Activated CD8-positive, alpha-beta T cell treated with anti-CD3 and anti-CD28 coated beads for 36 hours (primary cell): ENCODE measurements at regions of chr3 and their contacts with region 1.

Region 1: GRCh38 chr3:98573181-98573728 is 20.2 kb downstream of the CPOX start:
- DNase-seq: no peak
- ATAC-seq: peak; percentile 48
- H3K4me3 Mint-ChIP-seq: no peak overlapping the region
- H3K27ac Mint-ChIP-seq: peak overlapping the region; percentile 76
- H3K4me1 Mint-ChIP-seq: peaks cover 50% of the 10 kb centered on the region
- H3K27me3 Mint-ChIP-seq: no peaks in the 10 kb centered on the region
- CTCF ChIP-seq: peak; percentile 87

Region 2: DNA sequence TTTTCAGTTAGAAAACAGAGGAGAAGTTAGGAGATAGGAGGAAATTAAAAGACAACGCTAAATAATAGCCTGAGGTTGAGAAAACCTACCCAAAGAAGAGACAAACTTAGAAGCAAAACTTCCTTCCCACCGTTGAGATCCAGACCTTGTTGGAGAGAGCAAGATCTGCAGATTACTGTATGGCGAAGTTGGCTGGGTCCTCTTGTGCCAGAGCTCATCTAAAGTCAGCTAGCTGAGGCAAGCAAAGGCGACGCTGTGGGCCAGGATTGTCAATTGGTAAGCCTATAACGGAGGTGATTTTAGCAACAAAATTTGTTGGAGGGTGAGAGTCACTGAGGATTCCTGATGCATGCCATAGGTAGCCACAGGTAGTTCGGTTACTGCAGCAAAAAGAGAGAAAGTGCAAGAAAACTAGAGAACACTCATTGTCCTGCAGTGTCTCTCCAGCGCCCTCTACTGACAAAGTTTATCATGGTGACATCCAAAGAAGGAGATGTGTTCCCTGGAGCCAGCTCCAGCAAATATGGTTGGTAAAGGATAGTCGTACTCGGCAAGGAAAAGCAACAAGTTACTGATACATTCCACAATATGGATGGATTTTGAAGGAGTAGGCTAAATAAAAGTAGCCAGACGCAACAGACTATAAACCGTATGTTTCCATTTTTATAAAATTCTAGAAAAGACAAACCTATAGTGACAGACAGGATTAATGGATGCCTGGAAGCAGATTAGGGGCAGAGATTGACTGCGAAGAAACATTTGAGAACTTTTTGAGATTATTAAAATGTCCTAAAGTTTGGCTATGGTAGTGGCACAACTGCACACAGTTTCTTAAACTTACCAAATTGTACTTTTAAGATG is 229.4 kb before region 1 on chr3:
- CTCF ChIA-PET with region 1: interaction called, 5 read pairs
- POLR2A ChIA-PET with region 1: no interaction called
- intact Hi-C with region 1: loop called (anchors 10 kb)
- DNase-seq: peak; percentile 51
- ATAC-seq: peak; percentile 37
- H3K4me3 Mint-ChIP-seq: no peak overlapping the region
- H3K27ac Mint-ChIP-seq: no peak overlapping the region
- H3K4me1 Mint-ChIP-seq: no peaks in the 10 kb centered on the region
- H3K27me3 Mint-ChIP-seq: peaks cover 12% of the 10 kb centered on the region
- CTCF ChIP-seq: peak; percentile 77

Region 3: GRCh38 chr3:98440283-98440942 is 132.8 kb before region 1 on chr3:
- CTCF ChIA-PET with region 1: interaction called, 3 read pairs
- POLR2A ChIA-PET with region 1: no interaction called
- intact Hi-C with region 1: loop called (anchors 5 kb)
- DNase-seq: no peak
- ATAC-seq: no peak
- H3K4me3 Mint-ChIP-seq: no peak overlapping the region
- H3K27ac Mint-ChIP-seq: no peak overlapping the region
- H3K4me1 Mint-ChIP-seq: no peaks in the 10 kb centered on the region
- H3K27me3 Mint-ChIP-seq: no peaks in the 10 kb centered on the region
- CTCF ChIP-seq: no peak

Region 4: DNA sequence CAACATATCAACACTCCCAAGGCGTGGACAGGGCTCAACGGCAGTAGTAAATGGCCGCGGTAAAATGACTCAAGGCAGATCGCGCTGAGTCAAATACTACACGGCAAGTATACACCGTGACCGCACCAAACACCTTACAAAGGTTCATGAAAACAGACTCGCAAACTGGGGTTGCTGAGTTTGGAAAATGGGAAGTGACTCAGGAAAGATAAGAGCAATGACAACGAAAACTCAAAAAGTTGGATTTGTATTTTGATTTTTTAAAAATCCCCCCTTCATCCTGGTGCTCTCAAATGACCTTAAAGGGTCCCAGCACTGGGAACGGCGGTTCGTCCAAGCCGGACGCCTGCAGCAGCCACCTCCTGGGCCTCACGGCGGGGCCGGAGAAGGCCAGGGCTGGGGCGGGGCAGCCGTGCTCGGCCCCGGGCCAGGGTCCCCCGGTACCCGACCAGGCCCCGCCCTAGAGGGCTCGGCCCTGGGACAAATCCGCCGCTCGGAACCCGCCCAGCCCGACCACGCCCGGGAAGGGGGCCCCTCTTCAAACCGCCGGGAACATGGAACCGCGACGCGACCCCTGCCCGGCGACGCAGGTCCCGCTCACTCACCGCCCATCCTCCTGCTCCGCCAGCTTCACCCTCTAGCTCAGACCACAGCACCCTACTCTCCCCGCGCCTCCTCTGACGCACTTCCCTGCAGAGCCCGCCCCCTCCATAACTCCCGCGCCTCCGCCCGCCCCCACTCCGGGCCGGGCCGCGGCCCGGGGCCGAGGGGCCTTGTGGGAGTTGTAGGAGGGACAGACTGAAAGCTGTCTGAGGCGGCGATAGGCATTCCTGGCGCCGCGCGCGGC is 50.8 kb before region 1 on chr3 and contains the start of gene CLDND1:
- CTCF ChIA-PET with region 1: interaction called, 9 read pairs
- POLR2A ChIA-PET with region 1: interaction called, 5 read pairs
- intact Hi-C with region 1: loop called (anchors 2 kb)
- DNase-seq: peak; percentile 97
- ATAC-seq: peak; percentile 96
- H3K4me3 Mint-ChIP-seq: peak within 1 kb of the TSS; percentile 89
- H3K27ac Mint-ChIP-seq: peak within 1 kb of the TSS; percentile 95
- H3K4me1 Mint-ChIP-seq: peaks cover 62% of the 10 kb centered on the region
- H3K27me3 Mint-ChIP-seq: no peaks in the 10 kb centered on the region
- CTCF ChIP-seq: no peak
- total RNA-seq, gene CLDND1: 190 to 198 TPM

Region 5: DNA sequence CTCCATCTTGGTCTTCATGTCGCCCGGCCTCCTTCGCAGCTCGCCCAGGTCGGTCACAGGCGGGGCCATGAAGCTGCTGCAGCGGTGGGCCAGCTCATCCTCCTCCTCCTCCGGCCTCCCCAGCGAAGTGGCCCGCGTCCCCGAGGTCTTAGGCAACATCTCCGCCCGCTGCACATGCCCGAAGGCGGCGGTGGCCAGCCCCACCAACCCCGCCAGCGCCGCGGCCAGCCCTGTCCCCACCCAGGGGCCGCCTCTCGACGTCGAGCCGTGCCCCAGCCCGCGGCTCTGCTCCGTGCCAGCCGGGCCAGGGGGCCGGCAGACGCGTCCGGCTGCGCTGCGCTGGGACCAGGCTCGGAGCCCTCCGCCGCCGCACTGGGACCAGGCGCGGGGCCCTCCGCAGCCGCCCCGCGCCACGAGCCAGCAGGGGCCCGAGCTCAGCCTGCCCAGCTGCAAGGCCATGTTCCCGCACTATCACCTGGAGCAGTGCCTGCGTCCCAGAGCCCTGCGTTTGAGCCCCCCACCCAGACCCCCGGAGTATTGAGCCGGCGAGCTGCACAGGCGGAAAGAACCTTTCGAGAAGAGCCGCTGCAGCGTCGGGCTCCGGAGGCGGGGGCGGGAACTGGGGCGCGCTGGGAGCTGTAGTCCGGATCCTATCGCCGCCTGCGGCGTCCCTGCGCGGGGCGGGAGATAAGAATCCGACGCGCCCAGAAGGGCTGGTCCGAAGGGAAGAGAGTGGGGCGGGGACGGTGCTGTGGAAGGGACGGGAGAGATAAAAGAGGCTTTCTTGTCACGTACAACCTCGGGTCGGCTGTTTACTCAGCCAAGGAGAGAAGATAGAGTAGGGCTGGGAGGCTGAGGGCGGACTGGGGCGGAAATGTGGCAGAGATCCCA is 20.0 kb after region 1 on chr3 and contains the start of gene CPOX:
- CTCF ChIA-PET with region 1: interaction called, 44 read pairs
- POLR2A ChIA-PET with region 1: interaction called, 5 read pairs
- intact Hi-C with region 1: no loop called
- DNase-seq: peak; percentile 94
- ATAC-seq: peak; percentile 99
- H3K4me3 Mint-ChIP-seq: peak within 1 kb of the TSS; percentile 96
- H3K27ac Mint-ChIP-seq: peak within 1 kb of the TSS; percentile 96
- H3K4me1 Mint-ChIP-seq: peaks cover 41% of the 10 kb centered on the region
- H3K27me3 Mint-ChIP-seq: no peaks in the 10 kb centered on the region
- CTCF ChIP-seq: no peak
- total RNA-seq, gene CPOX: 40.5 to 45.3 TPM